Naive thymus-derived CD4-positive, alpha-beta T cell (primary cell): ENCODE measurements at regions of chr16 and their contacts with region 1.

Region 1: GRCh38 chr16:50651835-50652438 is 29.2 kb downstream of the SNX20 start:
- DNase-seq: no peak
- ATAC-seq: no peak
- H3K4me3 ChIP-seq: no peak overlapping the region
- H3K4me3 Mint-ChIP-seq: peak overlapping the region in 1 of 10 donors; percentile 23
- H3K27ac ChIP-seq: no peak overlapping the region
- H3K27ac Mint-ChIP-seq: no peak overlapping the region
- H3K4me1 ChIP-seq: no peaks in the 10 kb centered on the region
- H3K4me1 Mint-ChIP-seq: peaks cover 0 to 6% (median 0%) of the 10 kb centered on the region in 7 donors
- H3K27me3 ChIP-seq: no peaks in the 10 kb centered on the region
- H3K27me3 Mint-ChIP-seq: no peaks in the 10 kb centered on the region

Region 2: GRCh38 chr16:50573947-50574744 is 77.8 kb before region 1 on chr16:
- CTCF ChIA-PET with region 1: no interaction called
- POLR2A ChIA-PET with region 1: no interaction called
- intact Hi-C with region 1: no loop called
- DNase-seq: no peak
- ATAC-seq: no peak
- H3K4me3 ChIP-seq: no peak overlapping the region
- H3K4me3 Mint-ChIP-seq: no peak overlapping the region
- H3K27ac ChIP-seq: no peak overlapping the region
- H3K27ac Mint-ChIP-seq: peak overlapping the region in 4 of 9 donors; percentile 33 to 63 (median 56)
- H3K4me1 ChIP-seq: no peaks in the 10 kb centered on the region
- H3K4me1 Mint-ChIP-seq: peaks cover 0 to 33% (median 16%) of the 10 kb centered on the region in 7 donors
- H3K27me3 ChIP-seq: no peaks in the 10 kb centered on the region
- H3K27me3 Mint-ChIP-seq: no peaks in the 10 kb centered on the region

Region 3: GRCh38 chr16:50665128-50665878 is 13.4 kb after region 1 on chr16:
- CTCF ChIA-PET with region 1: interaction called, 12 read pairs
- POLR2A ChIA-PET with region 1: no interaction called
- intact Hi-C with region 1: no loop called
- DNase-seq: peak; percentile 71 to 90 (median 77)
- ATAC-seq: peak; percentile 80
- H3K4me3 ChIP-seq: peak overlapping the region; percentile 60
- H3K4me3 Mint-ChIP-seq: peak overlapping the region; percentile 73 to 87 (median 84)
- H3K27ac ChIP-seq: peak overlapping the region; percentile 62
- H3K27ac Mint-ChIP-seq: peak overlapping the region; percentile 82 to 97 (median 89)
- H3K4me1 ChIP-seq: peaks cover 17% of the 10 kb centered on the region in 2 donors
- H3K4me1 Mint-ChIP-seq: peaks cover 28 to 49% (median 44%) of the 10 kb centered on the region in 7 donors
- H3K27me3 ChIP-seq: no peaks in the 10 kb centered on the region
- H3K27me3 Mint-ChIP-seq: no peaks in the 10 kb centered on the region